Common myeloid progenitor, CD34-positive (primary cell): ENCODE measurements at regions of chr7 and their contacts with region 1.

Region 1: DNA sequence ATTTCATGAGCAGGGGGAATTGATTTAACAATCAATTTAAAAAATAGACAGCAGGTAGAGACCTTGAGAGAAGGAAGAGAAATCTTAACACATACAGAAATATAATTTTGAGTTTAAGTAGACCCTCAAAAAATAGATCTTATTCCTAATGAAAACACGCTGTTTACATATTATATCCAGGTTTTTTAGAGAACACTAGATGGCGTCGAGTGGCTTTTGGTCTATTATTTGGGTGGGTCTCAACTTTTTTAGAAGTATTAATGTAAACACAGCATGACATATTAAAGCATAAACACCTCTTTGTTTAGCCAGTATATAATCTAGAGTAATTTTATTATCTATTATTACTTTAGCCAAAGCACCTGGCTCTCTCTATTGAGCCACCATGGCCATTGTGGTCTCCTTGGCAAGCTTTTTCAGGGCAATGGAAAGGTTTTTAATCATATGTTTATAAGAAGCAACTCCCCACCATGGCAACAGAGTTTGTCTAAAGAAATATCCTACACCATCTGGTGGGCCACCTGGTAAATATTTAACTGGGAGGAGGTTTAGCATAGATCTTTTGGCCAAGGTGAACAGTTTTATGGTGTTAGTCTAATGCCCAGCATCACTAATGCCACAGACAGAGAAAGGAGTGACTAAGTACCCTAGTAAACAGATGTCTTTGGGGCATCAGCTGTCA is 59.7 kb upstream of the PRSS1 start:
- DNase-seq: peak in 2 of 3 donors; percentile 58 to 78
- H3K4me3 ChIP-seq: no peak overlapping the region
- H3K27ac ChIP-seq: peak overlapping the region in 1 of 2 experiments; percentile 34
- H3K4me1 ChIP-seq: peaks cover 0 to 21% (median 18%) of the 10 kb centered on the region in 4 experiments
- H3K27me3 ChIP-seq: no peaks in the 10 kb centered on the region

Region 2: DNA sequence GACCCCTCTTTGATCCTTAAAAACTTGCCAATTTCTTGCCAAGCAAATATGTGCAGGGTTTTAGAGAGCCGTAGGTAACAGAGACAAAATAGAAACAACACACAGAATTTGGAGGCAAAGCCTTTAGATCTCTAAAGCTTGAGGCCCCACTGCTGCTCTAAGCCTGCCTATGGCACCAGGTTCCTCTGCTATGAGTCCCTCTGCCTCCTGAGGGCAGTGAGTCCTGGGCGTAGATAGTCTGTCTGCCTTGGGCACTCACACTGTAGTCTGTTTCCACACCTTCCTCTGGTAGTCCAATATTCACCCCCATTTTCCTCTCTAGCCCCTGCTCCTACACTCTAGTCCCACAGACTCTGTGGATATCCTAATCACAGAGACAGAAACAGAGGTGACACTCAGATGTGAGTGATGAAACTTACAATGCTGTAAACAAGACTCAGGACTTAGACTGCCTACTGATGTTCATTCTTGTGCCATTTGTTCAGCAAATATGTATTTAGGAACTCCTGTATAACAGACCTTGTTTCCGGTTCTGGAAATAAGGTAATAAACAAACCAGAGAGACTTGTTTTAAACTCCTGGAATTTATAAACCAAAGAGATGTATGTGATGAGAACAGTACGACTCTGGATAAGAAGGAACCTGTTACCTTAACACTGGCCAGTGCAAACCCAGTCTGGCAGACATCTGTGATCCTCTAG is 93.6 kb before region 1 on chr7:
- CTCF ChIA-PET with region 1: no interaction called
- POLR2A ChIA-PET with region 1: no interaction called
- DNase-seq: no peak
- H3K4me3 ChIP-seq: no peak overlapping the region
- H3K27ac ChIP-seq: no peak overlapping the region
- H3K4me1 ChIP-seq: peaks cover 8 to 34% (median 28%) of the 10 kb centered on the region in 4 experiments
- H3K27me3 ChIP-seq: no peaks in the 10 kb centered on the region

Region 3: GRCh38 chr7:142703655-142704305 is 14.2 kb after region 1 on chr7:
- CTCF ChIA-PET with region 1: interaction called, 12 read pairs
- POLR2A ChIA-PET with region 1: interaction called, 3 read pairs
- DNase-seq: peak in 2 of 3 donors; percentile 71 to 82
- H3K4me3 ChIP-seq: peak overlapping the region in 2 of 7 experiments; percentile 15 to 29
- H3K27ac ChIP-seq: peak overlapping the region in 1 of 2 experiments; percentile 52
- H3K4me1 ChIP-seq: peaks cover 5 to 39% (median 24%) of the 10 kb centered on the region in 4 experiments
- H3K27me3 ChIP-seq: no peaks in the 10 kb centered on the region